Panc1 (cell line): ENCODE measurements at regions of chr1 and their contacts with region 1.

Region 1: DNA sequence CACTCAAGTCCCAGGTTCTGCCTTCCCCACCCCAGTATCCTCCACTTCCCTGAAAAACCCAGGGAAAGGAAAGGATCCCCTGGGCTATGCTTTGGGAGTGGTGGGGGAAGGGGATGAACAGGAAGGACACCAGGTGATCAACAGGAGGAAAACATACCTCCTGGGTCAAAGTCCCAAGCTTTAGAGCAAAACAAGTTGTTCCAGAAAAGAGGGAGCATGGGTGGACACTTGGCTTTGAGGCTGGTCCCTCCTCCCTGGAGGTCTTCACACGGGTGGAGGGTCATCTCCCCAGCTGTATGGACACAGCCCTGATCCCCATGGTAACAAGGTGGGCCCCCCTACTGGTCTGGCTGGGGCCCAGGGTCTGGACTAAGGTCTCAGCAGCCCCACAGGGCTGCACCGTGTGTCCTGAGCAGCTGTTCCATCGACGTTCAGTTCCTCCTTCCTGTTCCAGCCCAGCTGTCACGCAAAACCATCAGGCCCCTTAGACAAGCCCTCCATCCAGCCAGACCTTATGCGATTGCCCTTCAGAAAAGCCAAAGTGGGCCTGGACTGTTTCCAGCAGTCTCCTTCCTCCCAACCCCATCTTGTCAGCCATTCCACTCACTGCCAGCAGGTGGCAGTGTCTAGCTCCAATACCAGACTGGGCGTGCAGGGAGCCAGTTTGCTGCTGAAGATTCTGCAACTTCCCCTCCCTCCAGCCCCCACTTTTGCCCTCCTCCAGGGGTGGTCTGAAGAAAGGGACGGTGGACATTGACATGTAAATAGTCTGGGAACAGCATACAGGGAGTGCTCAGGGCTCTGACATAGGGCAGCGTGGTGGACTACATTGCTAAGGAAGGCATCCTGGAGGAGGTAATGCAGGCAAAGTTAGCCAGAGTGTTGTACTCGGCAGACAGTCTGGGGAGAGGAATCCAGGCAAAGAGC is 2.9 kb upstream of the PDZK1IP1 start:
- DNase-seq: peak; percentile 53
- ATAC-seq: peak; percentile 79
- H3K4me3 ChIP-seq: no peak overlapping the region
- H3K27ac ChIP-seq: no peak overlapping the region
- H3K4me1 ChIP-seq: no peaks in the 10 kb centered on the region
- H3K27me3 ChIP-seq: no peaks in the 10 kb centered on the region
- CTCF ChIP-seq: peak; percentile 97

Region 2: GRCh38 chr1:47262787-47263413 is 70.2 kb after region 1 on chr1:
- CTCF ChIA-PET with region 1: interaction called, 24 read pairs
- POLR2A ChIA-PET with region 1: no interaction called
- in situ Hi-C with region 1: no loop called
- intact Hi-C with region 1: loop called (anchors 1 kb)
- DNase-seq: peak; percentile 33
- ATAC-seq: peak; percentile 79
- H3K4me3 ChIP-seq: no peak overlapping the region
- H3K27ac ChIP-seq: no peak overlapping the region
- H3K4me1 ChIP-seq: no peaks in the 10 kb centered on the region
- H3K27me3 ChIP-seq: no peaks in the 10 kb centered on the region
- CTCF ChIP-seq: peak; percentile 77

Region 3: DNA sequence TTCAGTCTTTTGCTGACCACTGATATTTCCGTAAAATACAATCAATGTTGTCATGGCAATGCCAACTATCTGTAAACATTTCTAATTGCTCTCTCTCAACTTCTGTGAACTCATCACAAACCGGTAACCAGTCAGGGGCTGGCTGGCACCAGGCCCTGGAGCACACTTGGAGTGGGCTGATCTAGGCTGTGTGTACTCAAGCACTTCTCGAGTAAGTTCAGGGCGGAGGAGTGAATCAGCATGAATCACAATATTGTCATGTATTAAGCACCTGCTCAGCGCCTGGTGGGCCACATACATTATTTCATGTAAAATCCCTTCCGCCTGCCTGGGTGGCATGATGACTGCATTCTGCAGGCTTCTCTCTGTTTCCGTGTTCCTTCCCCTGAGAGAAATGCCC is 457.5 kb after region 1 on chr1:
- CTCF ChIA-PET with region 1: interaction called, 10 read pairs
- POLR2A ChIA-PET with region 1: no interaction called
- in situ Hi-C with region 1: no loop called
- intact Hi-C with region 1: no loop called
- DNase-seq: peak; percentile 72
- ATAC-seq: peak; percentile 75
- H3K4me3 ChIP-seq: no peak overlapping the region
- H3K27ac ChIP-seq: no peak overlapping the region
- H3K4me1 ChIP-seq: no peaks in the 10 kb centered on the region
- H3K27me3 ChIP-seq: no peaks in the 10 kb centered on the region
- CTCF ChIP-seq: no peak